ENCODE measurements at regions of chr16 and their contacts with region 1.

Region 1: DNA sequence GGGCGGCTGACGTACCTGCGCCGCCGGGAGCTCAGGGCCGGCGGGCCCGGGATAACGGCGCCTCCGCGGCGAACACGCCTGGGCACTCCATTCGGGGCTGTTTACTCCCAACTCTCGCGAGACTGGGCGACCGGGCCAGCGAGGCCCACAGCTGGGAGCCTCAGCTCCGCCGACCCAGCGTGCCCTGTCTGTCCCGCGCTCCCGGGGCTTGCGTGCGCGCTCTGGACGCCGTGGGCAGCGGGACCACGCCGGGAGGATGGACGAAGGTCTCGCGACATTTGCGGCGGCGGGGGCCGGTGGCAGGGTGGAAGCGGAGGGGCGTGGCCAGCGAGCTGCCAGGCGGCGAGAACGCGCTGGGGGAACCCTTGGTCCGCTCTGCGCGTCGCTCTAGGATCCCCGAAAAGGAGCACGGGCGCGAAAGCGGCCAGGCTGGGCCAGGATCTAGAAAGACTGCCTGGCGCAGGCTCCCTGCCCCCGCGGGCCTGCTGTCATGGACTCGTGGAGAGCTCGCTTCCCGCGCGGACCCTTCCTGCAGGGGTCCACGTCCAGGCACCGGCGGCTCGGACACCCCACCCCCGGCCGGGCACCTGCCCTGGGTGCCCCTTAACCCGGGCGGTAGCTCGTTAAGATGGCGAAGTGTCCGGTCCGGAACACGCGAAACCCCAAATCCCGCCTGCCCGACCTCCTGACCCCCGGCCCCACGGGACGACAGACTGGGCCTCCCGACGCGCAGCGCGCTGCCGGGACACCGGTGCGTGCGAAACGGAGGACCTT is at the start of gene MBTPS1:
- DNase-seq: peak; percentile 96 to 98 (median 98)
- H3K4me3 ChIP-seq: peak within 1 kb of the TSS; percentile 55 to 96
- H3K4me3 Mint-ChIP-seq: peak within 1 kb of the TSS; percentile 90 to 96 (median 92)
- H3K27ac ChIP-seq: peak within 1 kb of the TSS; percentile 91
- H3K27ac Mint-ChIP-seq: peak within 1 kb of the TSS; percentile 93 to 99 (median 96)
- H3K4me1 ChIP-seq: peaks cover 34% of the 10 kb centered on the region
- H3K4me1 Mint-ChIP-seq: peaks cover 11 to 34% (median 21%) of the 10 kb centered on the region in 4 donors
- H3K27me3 ChIP-seq: no peaks in the 10 kb centered on the region
- H3K27me3 Mint-ChIP-seq: no peaks in the 10 kb centered on the region
- total RNA-seq, gene MBTPS1: 137 to 140 TPM

Region 2: GRCh38 chr16:84084570-84085270 is 32.2 kb before region 1 on chr16:
- CTCF ChIA-PET with region 1: interaction called, 25 read pairs
- POLR2A ChIA-PET with region 1: interaction called, 8 read pairs
- intact Hi-C with region 1: loop called (anchors 2 kb)
- DNase-seq: peak; percentile 64 to 76 (median 67)
- H3K4me3 ChIP-seq: no peak overlapping the region
- H3K4me3 Mint-ChIP-seq: peak overlapping the region in 4 of 8 donors; percentile 13 to 39 (median 18)
- H3K27ac ChIP-seq: no peak overlapping the region
- H3K27ac Mint-ChIP-seq: peak overlapping the region in 5 of 7 donors; percentile 19 to 64 (median 55)
- H3K4me1 ChIP-seq: peaks cover 29% of the 10 kb centered on the region
- H3K4me1 Mint-ChIP-seq: peaks cover 29 to 52% (median 35%) of the 10 kb centered on the region in 4 donors
- H3K27me3 ChIP-seq: no peaks in the 10 kb centered on the region
- H3K27me3 Mint-ChIP-seq: no peaks in the 10 kb centered on the region

Region 3: GRCh38 chr16:84144859-84145639 is 28.1 kb after region 1 on chr16 and contains the starts of genes DNAAF1 and HSDL1:
- CTCF ChIA-PET with region 1: interaction called, 5 read pairs
- POLR2A ChIA-PET with region 1: interaction called, 55 read pairs
- intact Hi-C with region 1: loop called (anchors 1 kb)
- DNase-seq: peak; percentile 89 to 95 (median 93)
- H3K4me3 ChIP-seq: peak within 1 kb of the TSS; percentile 61 to 78
- H3K4me3 Mint-ChIP-seq: peak within 1 kb of the TSS; percentile 92 to 98 (median 94)
- H3K27ac ChIP-seq: peak within 1 kb of the TSS; percentile 65
- H3K27ac Mint-ChIP-seq: peak within 1 kb of the TSS; percentile 49 to 95 (median 91)
- H3K4me1 ChIP-seq: peaks cover 13% of the 10 kb centered on the region
- H3K4me1 Mint-ChIP-seq: peaks cover 4 to 19% (median 12%) of the 10 kb centered on the region in 4 donors
- H3K27me3 ChIP-seq: no peaks in the 10 kb centered on the region
- H3K27me3 Mint-ChIP-seq: peaks cover 3 to 6% of the 10 kb centered on the region in 2 donors
- total RNA-seq, gene DNAAF1: 0.19 TPM in 1 of 2 experiments, not detected in the other
- total RNA-seq, gene HSDL1: 20.1 to 23.0 TPM

Region 4: DNA sequence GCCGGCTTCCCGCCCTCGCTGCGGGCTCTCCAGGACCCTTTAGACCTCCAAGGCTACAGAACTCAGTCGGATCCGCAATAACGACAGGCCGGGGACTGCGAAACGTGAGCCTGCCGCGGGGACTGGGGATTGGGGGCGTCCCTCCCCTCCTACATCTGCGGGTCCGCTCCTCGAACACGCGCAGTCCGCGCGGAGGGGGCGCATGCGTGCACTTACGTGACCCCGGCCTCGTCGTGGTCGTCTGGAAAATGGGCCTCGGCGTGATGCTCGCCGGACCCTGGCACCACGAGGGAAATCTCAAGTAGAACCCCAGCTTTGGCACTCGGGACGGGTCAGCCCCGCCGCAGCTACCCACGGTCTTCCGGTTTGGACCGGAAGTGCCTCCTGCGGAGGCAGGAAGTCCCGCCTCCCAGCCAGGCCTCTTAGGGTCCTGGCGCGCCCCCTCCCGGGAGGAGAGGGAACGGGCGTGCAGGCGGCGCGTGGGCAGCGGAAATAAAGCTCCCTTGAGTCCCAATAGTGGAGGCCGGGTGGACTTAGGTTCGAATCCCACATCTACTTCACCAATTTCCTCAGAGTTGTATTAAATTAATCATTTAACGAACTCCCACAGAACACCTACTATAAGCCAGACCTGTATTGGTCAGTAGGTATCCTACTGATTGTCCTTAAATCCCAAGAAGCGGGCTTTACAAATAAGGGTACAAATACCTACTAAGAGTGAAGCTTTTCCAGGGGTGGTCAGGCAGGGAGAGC is 70.0 kb after region 1 on chr16 and contains the start of gene TAF1C:
- CTCF ChIA-PET with region 1: interaction called, 17 read pairs
- POLR2A ChIA-PET with region 1: interaction called, 36 read pairs
- intact Hi-C with region 1: loop called (anchors 1 kb)
- DNase-seq: peak; percentile 83 to 88 (median 86)
- H3K4me3 ChIP-seq: peak within 1 kb of the TSS; percentile 90 to 98
- H3K4me3 Mint-ChIP-seq: peak within 1 kb of the TSS; percentile 91 to 95 (median 93)
- H3K27ac ChIP-seq: peak within 1 kb of the TSS; percentile 71
- H3K27ac Mint-ChIP-seq: peak within 1 kb of the TSS; percentile 77 to 97 (median 94)
- H3K4me1 ChIP-seq: peaks cover 19% of the 10 kb centered on the region
- H3K4me1 Mint-ChIP-seq: peaks cover 10 to 32% (median 21%) of the 10 kb centered on the region in 4 donors
- H3K27me3 ChIP-seq: no peaks in the 10 kb centered on the region
- H3K27me3 Mint-ChIP-seq: no peaks in the 10 kb centered on the region
- total RNA-seq, gene TAF1C: 91.5 to 102 TPM